ENCODE measurements at regions of chr17 and their contacts with region 1.

Region 1: GRCh38 chr17:36629252-36629847 is 28.0 kb downstream of the MRM1 start:
- DNase-seq: peak; percentile 55
- ATAC-seq: peak; percentile 92
- H3K4me3 ChIP-seq: no peak overlapping the region
- H3K27ac ChIP-seq: no peak overlapping the region
- H3K4me1 ChIP-seq: peaks cover 23% of the 10 kb centered on the region
- H3K27me3 ChIP-seq: peaks cover 6 to 21% of the 10 kb centered on the region in 2 experiments; a peak in 4 of 5 replicates
- CTCF ChIP-seq: peak; percentile 98
- EP300 ChIP-seq: no peak
- POLR2A ChIP-seq: no peak
- RAD21 ChIP-seq: peak; percentile 94

Region 2: DNA sequence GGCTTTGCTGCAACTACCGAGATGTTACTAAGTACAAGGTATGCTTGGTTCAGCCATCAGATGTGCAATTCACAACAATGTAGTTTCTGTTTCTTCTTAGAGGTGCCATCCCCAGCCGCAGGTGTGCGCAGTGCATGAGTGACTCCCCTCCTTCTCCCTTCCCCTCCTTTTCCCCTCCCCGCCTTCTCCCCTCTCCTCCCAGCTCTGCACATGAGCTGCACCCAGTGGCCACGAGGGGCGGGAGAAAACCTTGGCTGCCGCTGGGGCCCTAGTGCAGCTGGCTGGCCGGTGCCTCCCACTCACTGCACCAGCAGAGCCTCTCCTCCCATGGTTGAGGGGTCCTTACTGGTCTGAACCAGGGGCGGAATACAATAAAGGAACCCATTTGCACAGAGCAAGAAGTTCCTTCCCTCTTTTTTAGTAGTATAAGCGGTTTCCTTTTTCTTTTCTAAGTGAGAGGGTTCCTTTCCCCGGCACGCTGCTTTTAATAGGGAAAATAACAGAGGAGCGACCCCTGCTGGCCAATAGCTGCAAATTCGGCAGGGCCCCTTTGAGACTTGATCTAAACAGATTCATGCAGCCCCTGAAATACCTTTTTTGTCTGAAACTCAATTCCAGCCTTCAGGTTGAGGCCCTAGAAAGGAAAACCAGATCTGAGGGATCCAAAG is 620.2 kb before region 1 on chr17:
- CTCF ChIA-PET with region 1: no interaction called
- POLR2A ChIA-PET with region 1: no interaction called
- in situ Hi-C with region 1: no loop called
- intact Hi-C with region 1: no loop called
- DNase-seq: peak; percentile 48
- ATAC-seq: peak; percentile 91
- H3K4me3 ChIP-seq: no peak overlapping the region
- H3K27ac ChIP-seq: no peak overlapping the region
- H3K4me1 ChIP-seq: peaks cover 49% of the 10 kb centered on the region
- H3K27me3 ChIP-seq: no peaks in the 10 kb centered on the region
- CTCF ChIP-seq: peak; percentile 71
- EP300 ChIP-seq: no peak
- POLR2A ChIP-seq: no peak
- RAD21 ChIP-seq: peak; percentile 80

Region 3: GRCh38 chr17:36460265-36460937 is 168.9 kb before region 1 on chr17:
- CTCF ChIA-PET with region 1: no interaction called
- POLR2A ChIA-PET with region 1: no interaction called
- in situ Hi-C with region 1: no loop called
- intact Hi-C with region 1: no loop called
- DNase-seq: no peak
- ATAC-seq: no peak
- H3K4me3 ChIP-seq: no peak overlapping the region
- H3K27ac ChIP-seq: no peak overlapping the region
- H3K4me1 ChIP-seq: no peaks in the 10 kb centered on the region
- H3K27me3 ChIP-seq: peaks cover 2 to 15% of the 10 kb centered on the region in 2 experiments; a peak in 2 of 5 replicates
- CTCF ChIP-seq: no peak
- EP300 ChIP-seq: no peak
- POLR2A ChIP-seq: no peak
- RAD21 ChIP-seq: no peak

Region 4: DNA sequence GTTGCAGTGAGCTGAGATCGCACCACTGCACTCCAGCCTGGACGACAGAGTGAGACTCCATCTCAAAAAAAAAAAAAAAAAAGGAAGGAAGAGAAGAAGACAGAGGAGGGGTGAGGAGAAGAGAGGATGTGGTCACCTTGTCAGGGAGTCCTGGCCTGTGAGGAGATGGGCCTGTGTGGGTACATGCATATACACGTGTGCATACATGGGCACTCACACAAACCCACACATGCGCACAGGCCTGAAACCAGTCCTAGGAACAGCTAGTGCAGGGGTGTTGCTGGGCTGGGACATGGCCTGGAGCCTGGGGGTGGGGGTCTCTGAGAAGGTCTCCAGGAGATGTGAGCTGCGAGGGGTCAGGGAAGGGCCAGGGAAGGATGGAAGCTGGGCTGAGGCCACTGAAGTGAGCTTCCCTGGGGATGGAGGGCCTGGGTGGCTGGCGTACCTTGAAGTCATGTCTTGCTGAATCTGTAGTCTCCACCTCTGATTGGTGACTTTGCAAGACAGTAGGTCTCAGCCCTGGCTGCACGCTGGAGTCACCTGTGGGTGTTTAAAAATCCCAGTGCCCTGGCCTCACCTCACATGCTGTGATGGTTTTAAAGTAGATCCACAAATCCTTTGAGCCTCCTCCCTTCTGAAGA is 44.4 kb after region 1 on chr17:
- CTCF ChIA-PET with region 1: interaction called, 5 read pairs
- POLR2A ChIA-PET with region 1: no interaction called
- in situ Hi-C with region 1: no loop called
- intact Hi-C with region 1: loop called (anchors 1 kb)
- DNase-seq: no peak
- ATAC-seq: no peak
- H3K4me3 ChIP-seq: no peak overlapping the region
- H3K27ac ChIP-seq: no peak overlapping the region
- H3K4me1 ChIP-seq: no peaks in the 10 kb centered on the region
- H3K27me3 ChIP-seq: peaks cover 2 to 17% of the 10 kb centered on the region in 2 experiments; a peak in 2 of 5 replicates
- CTCF ChIP-seq: no peak
- EP300 ChIP-seq: no peak
- POLR2A ChIP-seq: no peak
- RAD21 ChIP-seq: no peak

Region 5: GRCh38 chr17:36705874-36706731 is 76.8 kb after region 1 on chr17:
- CTCF ChIA-PET with region 1: interaction called, 8 read pairs
- POLR2A ChIA-PET with region 1: no interaction called
- in situ Hi-C with region 1: no loop called
- intact Hi-C with region 1: loop called (anchors 2 kb)
- DNase-seq: peak; percentile 18
- ATAC-seq: peak; percentile 93
- H3K4me3 ChIP-seq: no peak overlapping the region
- H3K27ac ChIP-seq: no peak overlapping the region
- H3K4me1 ChIP-seq: no peaks in the 10 kb centered on the region
- H3K27me3 ChIP-seq: 0 out of 5 replicates have a peak, but pooled peaks cover 0 to 2% of the 10 kb centered on the region in 2 experiments
- CTCF ChIP-seq: peak; percentile 76
- EP300 ChIP-seq: no peak
- POLR2A ChIP-seq: no peak
- RAD21 ChIP-seq: peak; percentile 48; the same call in 1 of the 2 replicates

Region 6: DNA sequence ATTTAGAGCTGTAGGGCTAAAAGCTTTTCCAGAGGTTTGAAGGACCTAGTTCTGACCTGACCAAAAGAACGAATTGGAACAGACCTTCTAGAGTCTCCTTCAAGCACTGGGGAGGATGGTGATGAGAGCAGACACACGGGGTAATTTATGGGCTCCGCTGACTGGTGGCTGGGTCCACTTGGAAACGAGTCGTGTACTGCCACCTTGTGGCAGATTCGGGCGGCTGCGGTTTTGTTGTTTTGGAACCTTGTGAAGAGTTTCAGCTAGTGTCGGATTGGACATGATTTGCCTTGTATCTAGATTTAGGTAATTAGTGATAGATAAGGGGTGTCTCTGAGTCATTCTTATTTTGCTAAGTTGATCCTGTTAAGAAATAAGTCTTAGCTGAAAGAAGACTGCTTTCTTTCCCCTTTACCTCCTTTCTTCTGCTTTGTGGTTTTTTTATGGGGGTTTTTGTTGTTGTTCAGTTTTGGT is 418.3 kb after region 1 on chr17:
- CTCF ChIA-PET with region 1: interaction called, 11 read pairs
- POLR2A ChIA-PET with region 1: no interaction called
- in situ Hi-C with region 1: no loop called
- intact Hi-C with region 1: loop called (anchors 1 kb)
- DNase-seq: peak; percentile 68
- ATAC-seq: peak; percentile 77
- H3K4me3 ChIP-seq: no peak overlapping the region
- H3K27ac ChIP-seq: no peak overlapping the region
- H3K4me1 ChIP-seq: peaks cover 35% of the 10 kb centered on the region
- H3K27me3 ChIP-seq: no peaks in the 10 kb centered on the region
- CTCF ChIP-seq: peak; percentile 86
- EP300 ChIP-seq: no peak
- POLR2A ChIP-seq: no peak
- RAD21 ChIP-seq: peak; percentile 85

Region 7: GRCh38 chr17:37067555-37068111 is 438.3 kb after region 1 on chr17:
- CTCF ChIA-PET with region 1: no interaction called
- POLR2A ChIA-PET with region 1: no interaction called
- in situ Hi-C with region 1: loop called (anchors 10 kb)
- intact Hi-C with region 1: no loop called
- DNase-seq: peak; percentile 65
- ATAC-seq: peak; percentile 88
- H3K4me3 ChIP-seq: peak overlapping the region; percentile 20 to 67 (median 22); a peak in 4 of 6 replicates
- H3K27ac ChIP-seq: no peak overlapping the region
- H3K4me1 ChIP-seq: peaks cover 35% of the 10 kb centered on the region
- H3K27me3 ChIP-seq: peaks cover 2 to 31% of the 10 kb centered on the region in 2 experiments; a peak in 4 of 5 replicates
- CTCF ChIP-seq: 0 out of 2 replicates have a peak, but pooled peaks have one; percentile 7
- EP300 ChIP-seq: peak in 1 of 2 experiments; percentile 33; a peak in 1 of 4 replicates
- POLR2A ChIP-seq: no peak
- RAD21 ChIP-seq: no peak

Measured in HepG2 (cell line).